T-cell (primary cell): ENCODE measurements at regions of chr5 and their contacts with region 1.

Region 1: GRCh38 chr5:31604644-31605043 is 34.3 kb upstream of the PDZD2 start:
- DNase-seq: no peak
- ATAC-seq: no peak
- H3K4me3 ChIP-seq: no peak overlapping the region
- H3K4me3 Mint-ChIP-seq: no peak overlapping the region
- H3K27ac ChIP-seq: no peak overlapping the region
- H3K27ac Mint-ChIP-seq: no peak overlapping the region
- H3K4me1 ChIP-seq: no peaks in the 10 kb centered on the region
- H3K4me1 Mint-ChIP-seq: no peaks in the 10 kb centered on the region
- H3K27me3 ChIP-seq: peaks cover 0 to 2% of the 10 kb centered on the region in 2 experiments
- H3K27me3 Mint-ChIP-seq: peaks cover 4 to 8% of the 10 kb centered on the region in 2 donors

Region 2: DNA sequence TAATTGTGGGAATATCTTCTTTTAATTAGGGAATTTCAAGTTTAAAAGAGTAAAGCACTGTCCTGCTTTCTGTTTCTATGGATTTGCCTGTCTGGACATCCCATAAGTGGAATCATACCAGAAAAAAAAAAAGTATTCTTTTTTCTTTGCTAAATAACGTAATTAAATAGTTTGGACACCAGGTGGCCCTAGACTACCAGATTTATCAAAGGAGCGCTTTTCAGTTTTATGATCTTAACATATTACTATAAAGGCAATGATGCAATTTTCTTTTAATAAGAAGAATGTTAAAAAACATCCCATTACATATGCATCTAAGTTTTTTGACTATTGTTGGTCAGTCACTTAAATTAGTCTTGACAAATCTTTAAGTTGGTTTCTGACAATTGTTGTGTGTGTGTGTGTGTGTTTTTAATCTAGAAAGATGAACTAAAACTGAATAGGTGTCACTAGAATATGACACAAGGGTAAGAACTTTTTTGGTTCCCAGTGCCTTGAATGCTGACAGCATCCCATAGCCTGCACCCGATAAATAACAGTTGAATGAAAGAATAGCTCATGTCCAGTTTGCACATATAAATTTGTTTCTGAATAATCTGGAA is 23.0 kb before region 1 on chr5:
- CTCF ChIA-PET with region 1: no interaction called
- POLR2A ChIA-PET with region 1: no interaction called
- DNase-seq: peak in 5 of 35 experiments; percentile 1 to 55 (median 5)
- ATAC-seq: no peak
- H3K4me3 ChIP-seq: no peak overlapping the region
- H3K4me3 Mint-ChIP-seq: no peak overlapping the region
- H3K27ac ChIP-seq: no peak overlapping the region
- H3K27ac Mint-ChIP-seq: no peak overlapping the region
- H3K4me1 ChIP-seq: no peaks in the 10 kb centered on the region
- H3K4me1 Mint-ChIP-seq: no peaks in the 10 kb centered on the region
- H3K27me3 ChIP-seq: peaks cover 0 to 12% of the 10 kb centered on the region in 2 experiments
- H3K27me3 Mint-ChIP-seq: peaks cover 8 to 23% of the 10 kb centered on the region in 2 donors

Region 3: GRCh38 chr5:31626156-31626555 is 21.5 kb after region 1 on chr5:
- CTCF ChIA-PET with region 1: no interaction called
- POLR2A ChIA-PET with region 1: interaction called in 1 of 2 experiments, 11 read pairs
- DNase-seq: no peak
- ATAC-seq: no peak
- H3K4me3 ChIP-seq: no peak overlapping the region
- H3K4me3 Mint-ChIP-seq: no peak overlapping the region
- H3K27ac ChIP-seq: no peak overlapping the region
- H3K27ac Mint-ChIP-seq: no peak overlapping the region
- H3K4me1 ChIP-seq: no peaks in the 10 kb centered on the region
- H3K4me1 Mint-ChIP-seq: no peaks in the 10 kb centered on the region
- H3K27me3 ChIP-seq: peaks cover 0 to 4% of the 10 kb centered on the region in 2 experiments
- H3K27me3 Mint-ChIP-seq: peaks cover 16 to 40% of the 10 kb centered on the region in 2 donors